ENCODE measurements at regions of chr12 and their contacts with region 1.

Region 1: GRCh38 chr12:101830367-101831325 is at the start of gene GNPTAB:
- DNase-seq: peak; percentile 96
- H3K4me3 Mint-ChIP-seq: peak within 1 kb of the TSS; percentile 100
- H3K27ac Mint-ChIP-seq: peak within 1 kb of the TSS; percentile 93
- H3K4me1 Mint-ChIP-seq: peaks cover 48% of the 10 kb centered on the region
- H3K27me3 Mint-ChIP-seq: no peaks in the 10 kb centered on the region

Region 2: GRCh38 chr12:101773650-101774162 is 56.9 kb before region 1 on chr12:
- CTCF ChIA-PET with region 1: interaction called, 151 read pairs
- DNase-seq: peak; percentile 78
- H3K4me3 Mint-ChIP-seq: no peak overlapping the region
- H3K27ac Mint-ChIP-seq: peak overlapping the region; percentile 29
- H3K4me1 Mint-ChIP-seq: peaks cover 31% of the 10 kb centered on the region
- H3K27me3 Mint-ChIP-seq: no peaks in the 10 kb centered on the region

Region 3: DNA sequence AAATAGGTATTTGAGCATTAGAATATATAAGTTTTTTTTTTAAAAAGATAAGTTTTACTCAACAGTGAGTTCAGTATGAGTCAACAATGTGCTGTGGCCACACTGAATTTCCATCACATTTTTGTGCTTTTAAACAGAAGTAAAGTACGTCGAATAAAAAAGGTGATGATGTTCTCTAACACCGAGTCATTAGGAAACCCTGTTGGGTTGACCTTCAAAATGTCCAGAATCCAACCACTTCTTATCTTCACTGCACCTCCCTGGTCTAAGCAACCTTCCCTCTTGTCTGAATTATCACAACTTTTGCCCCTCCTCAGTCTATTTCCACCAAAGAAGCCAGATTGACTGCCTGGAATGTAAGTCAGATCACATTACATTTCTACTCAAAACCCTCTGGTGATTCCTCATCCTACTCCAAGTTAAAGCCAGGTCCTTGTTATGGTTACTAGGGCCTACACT is 48.3 kb before region 1 on chr12:
- CTCF ChIA-PET with region 1: interaction called, 31 read pairs
- DNase-seq: no peak
- H3K4me3 Mint-ChIP-seq: no peak overlapping the region
- H3K27ac Mint-ChIP-seq: no peak overlapping the region
- H3K4me1 Mint-ChIP-seq: peaks cover 6% of the 10 kb centered on the region
- H3K27me3 Mint-ChIP-seq: no peaks in the 10 kb centered on the region

Region 4: GRCh38 chr12:101792051-101792931 is 38.4 kb before region 1 on chr12:
- CTCF ChIA-PET with region 1: interaction called, 65 read pairs
- DNase-seq: no peak
- H3K4me3 Mint-ChIP-seq: no peak overlapping the region
- H3K27ac Mint-ChIP-seq: peak overlapping the region; percentile 0
- H3K4me1 Mint-ChIP-seq: peaks cover 48% of the 10 kb centered on the region
- H3K27me3 Mint-ChIP-seq: no peaks in the 10 kb centered on the region